Vagina (tissue), 2 donors: ENCODE measurements at regions of chr12 and their contacts with region 1.

Region 1: DNA sequence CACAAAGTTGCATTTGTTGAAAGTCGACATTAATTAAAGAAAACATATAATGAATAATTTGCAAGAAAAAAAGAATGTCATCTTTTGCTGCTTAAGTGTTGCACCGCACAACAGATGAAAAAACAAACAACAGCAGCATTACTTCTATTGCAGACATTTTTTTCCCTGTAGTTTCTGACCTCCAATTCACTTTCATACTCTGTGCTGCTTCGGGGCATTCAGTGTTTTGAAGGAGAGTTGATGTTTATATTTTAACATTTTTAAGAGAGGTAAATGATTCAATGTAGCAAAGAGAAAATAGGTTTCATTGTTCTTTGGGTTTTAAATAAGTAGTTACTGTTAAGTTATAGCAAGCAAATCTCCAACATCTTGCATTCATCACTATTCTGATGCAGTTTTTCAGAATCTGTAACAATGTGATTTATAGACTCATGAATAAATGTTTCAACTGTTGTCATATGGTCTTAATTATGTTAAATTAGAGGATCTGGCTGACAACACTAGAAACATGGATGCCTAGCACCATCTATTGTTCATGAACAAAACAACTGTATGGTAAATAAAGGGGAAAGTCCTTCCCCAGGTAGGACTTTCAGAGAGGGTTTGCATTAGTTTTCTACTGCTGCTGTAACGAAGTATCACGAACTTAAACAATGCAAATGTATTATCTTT is 168.1 kb downstream of the BCAT1 start:
- DNase-seq: no peak
- H3K4me3 ChIP-seq: no peak overlapping the region
- H3K27ac ChIP-seq: no peak overlapping the region
- H3K4me1 ChIP-seq: no peaks in the 10 kb centered on the region
- H3K27me3 ChIP-seq: no peaks in the 10 kb centered on the region
- CTCF ChIP-seq: no peak
- POLR2A ChIP-seq: no peak

Region 2: DNA sequence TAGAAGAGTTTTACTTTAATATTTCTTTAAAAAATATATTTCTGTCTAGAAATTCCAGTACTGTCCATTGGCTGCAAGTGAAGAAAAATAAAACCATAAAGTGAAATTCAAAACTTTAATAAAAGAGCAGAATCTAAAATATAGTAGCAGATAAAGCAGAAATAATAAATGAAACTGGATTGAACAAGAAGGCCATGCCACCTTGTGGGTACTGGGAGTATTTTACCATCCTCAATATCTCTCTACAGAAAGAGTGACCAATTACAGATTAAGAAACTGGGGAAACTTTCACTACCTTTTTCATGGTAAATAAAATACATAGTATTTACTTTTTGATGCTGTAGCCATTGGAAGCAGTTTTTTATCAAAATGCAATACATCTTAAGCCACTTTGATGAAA is 52.5 kb before region 1 on chr12:
- intact Hi-C with region 1: loop called (anchors 2 kb)
- DNase-seq: no peak
- H3K4me3 ChIP-seq: no peak overlapping the region
- H3K27ac ChIP-seq: no peak overlapping the region
- H3K4me1 ChIP-seq: no peaks in the 10 kb centered on the region
- H3K27me3 ChIP-seq: no peaks in the 10 kb centered on the region
- CTCF ChIP-seq: peak in 1 of 3 experiments; percentile 22
- POLR2A ChIP-seq: no peak

Region 3: DNA sequence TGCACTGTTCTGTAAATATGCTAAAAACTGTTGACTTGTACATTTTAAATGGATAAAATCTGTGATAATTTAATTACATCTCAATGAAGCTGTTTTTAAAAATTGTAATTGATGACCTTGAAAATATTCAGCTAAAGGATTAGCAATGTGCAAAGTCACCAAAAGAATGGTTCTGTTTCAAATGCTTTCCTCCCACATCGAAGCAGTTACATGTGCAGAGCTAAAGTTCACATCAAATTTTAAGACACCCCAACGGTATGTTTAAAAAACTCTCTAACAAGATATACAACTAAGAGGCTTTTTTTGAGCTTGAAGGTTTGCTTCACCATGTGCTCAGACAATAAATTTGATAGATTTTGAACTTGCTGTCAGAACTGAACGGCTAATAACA is 584.5 kb after region 1 on chr12:
- intact Hi-C with region 1: no loop called
- DNase-seq: no peak
- H3K4me3 ChIP-seq: no peak overlapping the region
- H3K27ac ChIP-seq: no peak overlapping the region
- H3K4me1 ChIP-seq: no peaks in the 10 kb centered on the region
- H3K27me3 ChIP-seq: no peaks in the 10 kb centered on the region
- CTCF ChIP-seq: no peak
- POLR2A ChIP-seq: no peak